ENCODE measurements at regions of chr1 and their contacts with region 1.

Region 1: GRCh38 chr1:172745014-172745413 is 86.1 kb downstream of the FASLG start:
- DNase-seq: peak in 6 of 9 experiments; percentile 25 to 79 (median 27)
- ATAC-seq: peak; percentile 62
- H3K4me3 ChIP-seq: no peak overlapping the region
- H3K4me3 Mint-ChIP-seq: no peak overlapping the region
- H3K27ac ChIP-seq: no peak overlapping the region
- H3K27ac Mint-ChIP-seq: peak overlapping the region; percentile 16
- H3K4me1 ChIP-seq: peaks cover 32% of the 10 kb centered on the region
- H3K4me1 Mint-ChIP-seq: peaks cover 45% of the 10 kb centered on the region
- H3K27me3 ChIP-seq: peaks cover 0 to 3% of the 10 kb centered on the region in 2 experiments
- H3K27me3 Mint-ChIP-seq: peaks cover 7% of the 10 kb centered on the region
- CTCF ChIP-seq: peak; percentile 78

Region 2: GRCh38 chr1:171850651-171851350 is 894.2 kb before region 1 on chr1:
- CTCF ChIA-PET with region 1: no interaction called
- POLR2A ChIA-PET with region 1: no interaction called
- intact Hi-C with region 1: no loop called
- DNase-seq: peak in 2 of 9 experiments; percentile 10 to 22
- ATAC-seq: no peak
- H3K4me3 ChIP-seq: no peak overlapping the region
- H3K4me3 Mint-ChIP-seq: no peak overlapping the region
- H3K27ac ChIP-seq: no peak overlapping the region
- H3K27ac Mint-ChIP-seq: no peak overlapping the region
- H3K4me1 ChIP-seq: no peaks in the 10 kb centered on the region
- H3K4me1 Mint-ChIP-seq: no peaks in the 10 kb centered on the region
- H3K27me3 ChIP-seq: peaks cover 0 to 2% of the 10 kb centered on the region in 2 experiments
- H3K27me3 Mint-ChIP-seq: peaks cover 5% of the 10 kb centered on the region
- CTCF ChIP-seq: no peak

Region 3: GRCh38 chr1:172380441-172381244 is 364.4 kb before region 1 on chr1:
- CTCF ChIA-PET with region 1: no interaction called
- POLR2A ChIA-PET with region 1: no interaction called
- intact Hi-C with region 1: no loop called
- DNase-seq: peak in 6 of 9 experiments; percentile 17 to 83 (median 43)
- ATAC-seq: peak; percentile 95
- H3K4me3 ChIP-seq: peak overlapping the region; percentile 22 to 25
- H3K4me3 Mint-ChIP-seq: peak overlapping the region; percentile 80
- H3K27ac ChIP-seq: peak overlapping the region; percentile 14 to 84
- H3K27ac Mint-ChIP-seq: peak overlapping the region; percentile 97
- H3K4me1 ChIP-seq: peaks cover 14% of the 10 kb centered on the region
- H3K4me1 Mint-ChIP-seq: peaks cover 39% of the 10 kb centered on the region
- H3K27me3 ChIP-seq: no peaks in the 10 kb centered on the region
- H3K27me3 Mint-ChIP-seq: no peaks in the 10 kb centered on the region
- CTCF ChIP-seq: no peak

Region 4: GRCh38 chr1:172778456-172779455 is 33.7 kb after region 1 on chr1:
- CTCF ChIA-PET with region 1: interaction called, 12 read pairs
- POLR2A ChIA-PET with region 1: no interaction called
- intact Hi-C with region 1: loop called in 1 of 2 experiments (anchors 2 kb)
- DNase-seq: peak in 2 of 9 experiments; percentile 38 to 51
- ATAC-seq: peak; percentile 78
- H3K4me3 ChIP-seq: peak overlapping the region in 1 of 2 experiments; percentile 28
- H3K4me3 Mint-ChIP-seq: peak overlapping the region; percentile 70
- H3K27ac ChIP-seq: no peak overlapping the region
- H3K27ac Mint-ChIP-seq: peak overlapping the region; percentile 25
- H3K4me1 ChIP-seq: no peaks in the 10 kb centered on the region
- H3K4me1 Mint-ChIP-seq: peaks cover 18% of the 10 kb centered on the region
- H3K27me3 ChIP-seq: no peaks in the 10 kb centered on the region
- H3K27me3 Mint-ChIP-seq: no peaks in the 10 kb centered on the region
- CTCF ChIP-seq: peak; percentile 44

Region 5: DNA sequence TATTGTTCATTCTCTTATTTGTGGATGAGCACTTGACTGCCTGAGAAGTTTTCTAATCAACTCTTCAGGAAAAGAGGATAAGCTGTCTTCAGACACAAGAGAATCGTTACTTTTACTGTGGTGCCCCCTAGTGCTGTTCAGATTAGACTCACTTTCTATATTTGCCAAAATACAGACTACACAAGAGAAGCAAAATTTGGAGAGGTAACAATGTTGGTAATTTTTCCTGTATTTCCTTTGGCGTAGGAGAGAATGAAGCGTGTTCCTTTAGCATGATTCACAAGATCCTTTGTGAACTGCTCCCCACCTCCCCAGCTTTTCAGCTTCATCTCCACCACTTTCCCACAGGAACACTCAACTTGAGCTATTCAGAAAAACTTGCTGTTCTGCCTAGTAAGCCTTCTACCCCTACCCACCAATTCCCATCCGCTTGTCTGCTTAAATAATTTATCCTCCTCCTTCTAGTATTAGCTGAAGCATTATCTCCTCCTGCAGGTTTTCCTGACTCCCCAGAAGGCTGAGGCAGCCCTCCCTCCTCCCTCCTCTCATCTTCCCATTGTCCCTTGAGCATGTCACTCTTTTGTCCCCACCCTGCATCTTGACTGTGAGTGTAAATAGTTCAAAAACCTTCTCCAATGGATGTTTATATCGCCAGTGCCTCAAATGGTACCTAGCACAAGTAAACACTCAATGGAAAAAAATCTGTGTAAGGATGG is 457.6 kb after region 1 on chr1:
- CTCF ChIA-PET with region 1: interaction called, 146 read pairs
- POLR2A ChIA-PET with region 1: interaction called, 5 read pairs
- intact Hi-C with region 1: loop called (anchors 1 kb)
- DNase-seq: peak in 2 of 9 experiments; percentile 41 to 54
- ATAC-seq: no peak
- H3K4me3 ChIP-seq: no peak overlapping the region
- H3K4me3 Mint-ChIP-seq: no peak overlapping the region
- H3K27ac ChIP-seq: no peak overlapping the region
- H3K27ac Mint-ChIP-seq: peak overlapping the region; percentile 3
- H3K4me1 ChIP-seq: peaks cover 40% of the 10 kb centered on the region
- H3K4me1 Mint-ChIP-seq: peaks cover 44% of the 10 kb centered on the region
- H3K27me3 ChIP-seq: no peaks in the 10 kb centered on the region
- H3K27me3 Mint-ChIP-seq: no peaks in the 10 kb centered on the region
- CTCF ChIP-seq: peak; percentile 39

Region 6: DNA sequence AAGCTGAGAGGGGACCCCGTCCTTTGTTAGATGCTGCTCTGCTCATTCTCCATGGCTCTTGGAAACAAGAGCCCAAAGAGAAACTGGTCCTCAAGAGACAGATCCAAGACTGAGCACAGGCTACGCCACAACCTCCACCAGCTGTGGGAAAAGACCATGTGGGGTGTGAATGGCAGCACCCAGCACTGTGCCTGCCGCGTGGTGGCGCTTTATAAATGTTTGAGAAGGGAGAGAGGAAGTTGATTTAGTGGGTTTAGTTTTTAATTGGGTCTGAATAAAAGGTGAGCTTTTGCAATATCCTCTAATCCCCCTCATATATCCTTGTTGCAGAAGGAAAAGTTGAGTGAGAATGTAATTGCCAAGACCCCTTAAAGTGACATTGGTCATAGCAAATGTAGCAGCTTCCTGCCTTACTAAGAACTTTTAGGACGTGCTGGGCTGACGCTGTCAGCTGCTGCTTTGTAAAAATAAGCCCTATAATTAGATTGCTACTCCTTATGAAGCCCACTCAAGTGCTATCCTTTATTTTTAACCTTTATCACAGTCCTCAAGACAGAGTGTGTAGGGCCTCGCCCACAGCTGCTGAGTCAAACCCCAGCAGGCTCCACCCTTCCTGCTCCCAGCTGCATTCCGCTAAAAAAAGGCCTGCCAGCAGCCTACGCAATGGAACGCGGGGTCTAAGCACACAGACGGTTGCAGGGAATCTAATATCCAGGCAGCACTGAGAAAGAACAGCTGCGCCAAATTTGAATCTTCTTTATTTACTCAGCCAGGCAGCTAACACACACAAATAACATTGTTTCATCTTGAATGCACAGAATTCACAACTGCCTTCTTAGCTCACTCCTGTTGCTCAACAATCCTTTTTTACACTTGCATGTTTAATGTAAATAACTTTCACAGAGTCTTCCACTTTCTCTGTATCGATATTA is 684.7 kb after region 1 on chr1:
- CTCF ChIA-PET with region 1: interaction called, 74 read pairs
- POLR2A ChIA-PET with region 1: no interaction called
- intact Hi-C with region 1: no loop called
- DNase-seq: peak; percentile 46 to 81 (median 69)
- ATAC-seq: peak; percentile 81
- H3K4me3 ChIP-seq: no peak overlapping the region
- H3K4me3 Mint-ChIP-seq: peak overlapping the region; percentile 53
- H3K27ac ChIP-seq: no peak overlapping the region
- H3K27ac Mint-ChIP-seq: peak overlapping the region; percentile 71
- H3K4me1 ChIP-seq: peaks cover 24% of the 10 kb centered on the region
- H3K4me1 Mint-ChIP-seq: peaks cover 26% of the 10 kb centered on the region
- H3K27me3 ChIP-seq: no peaks in the 10 kb centered on the region
- H3K27me3 Mint-ChIP-seq: no peaks in the 10 kb centered on the region
- CTCF ChIP-seq: peak; percentile 67

Region 7: GRCh38 chr1:174074757-174075156 is 1329.7 kb after region 1 on chr1:
- CTCF ChIA-PET with region 1: no interaction called
- POLR2A ChIA-PET with region 1: no interaction called
- intact Hi-C with region 1: loop called (anchors 5 to 10 kb)
- DNase-seq: peak in 2 of 9 experiments; percentile 8 to 26
- ATAC-seq: no peak
- H3K4me3 ChIP-seq: no peak overlapping the region
- H3K4me3 Mint-ChIP-seq: no peak overlapping the region
- H3K27ac ChIP-seq: no peak overlapping the region
- H3K27ac Mint-ChIP-seq: no peak overlapping the region
- H3K4me1 ChIP-seq: no peaks in the 10 kb centered on the region
- H3K4me1 Mint-ChIP-seq: no peaks in the 10 kb centered on the region
- H3K27me3 ChIP-seq: no peaks in the 10 kb centered on the region
- H3K27me3 Mint-ChIP-seq: peaks cover 2% of the 10 kb centered on the region
- CTCF ChIP-seq: peak; percentile 22

Region 8: GRCh38 chr1:174743654-174744561 is 1998.9 kb after region 1 on chr1:
- CTCF ChIA-PET with region 1: interaction called, 4 read pairs
- POLR2A ChIA-PET with region 1: no interaction called
- intact Hi-C with region 1: loop called in 1 of 2 experiments (anchors 5 kb)
- DNase-seq: peak in 2 of 9 experiments; percentile 64 to 74
- ATAC-seq: peak; percentile 29
- H3K4me3 ChIP-seq: no peak overlapping the region
- H3K4me3 Mint-ChIP-seq: no peak overlapping the region
- H3K27ac ChIP-seq: no peak overlapping the region
- H3K27ac Mint-ChIP-seq: no peak overlapping the region
- H3K4me1 ChIP-seq: no peaks in the 10 kb centered on the region
- H3K4me1 Mint-ChIP-seq: peaks cover 9% of the 10 kb centered on the region
- H3K27me3 ChIP-seq: no peaks in the 10 kb centered on the region
- H3K27me3 Mint-ChIP-seq: no peaks in the 10 kb centered on the region
- CTCF ChIP-seq: peak; percentile 66